ENCODE measurements at regions of chr2 and their contacts with region 1.

Region 1: DNA sequence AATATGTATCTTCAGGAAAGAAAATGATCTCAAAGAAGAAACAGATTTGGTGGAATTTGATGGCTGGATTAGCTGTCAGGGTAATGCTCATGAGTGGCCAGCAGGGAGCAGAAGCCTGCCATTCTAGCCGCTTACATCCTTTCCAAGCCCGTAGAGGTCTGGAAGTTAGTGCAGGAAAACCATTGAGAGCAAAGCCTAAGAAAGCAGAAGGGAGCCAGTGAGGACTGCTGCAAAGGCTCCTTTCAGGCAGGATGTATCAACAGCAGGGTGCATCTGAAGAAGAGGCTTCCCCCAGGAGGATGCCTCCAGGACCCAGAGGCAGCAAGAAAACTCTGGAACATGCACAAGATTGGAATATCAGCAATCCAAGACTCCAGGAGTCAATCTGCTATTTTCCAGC is 22.9 kb upstream of the LBH start:
- DNase-seq: peak; percentile 67
- ATAC-seq: peak; percentile 62
- H3K4me3 ChIP-seq: no peak overlapping the region
- H3K4me3 Mint-ChIP-seq: no peak overlapping the region
- H3K27ac ChIP-seq: no peak overlapping the region
- H3K27ac Mint-ChIP-seq: peak overlapping the region; percentile 22
- H3K4me1 ChIP-seq: peaks cover 9 to 18% of the 10 kb centered on the region in 2 donors
- H3K4me1 Mint-ChIP-seq: peaks cover 16% of the 10 kb centered on the region
- H3K27me3 ChIP-seq: no peaks in the 10 kb centered on the region
- H3K27me3 Mint-ChIP-seq: no peaks in the 10 kb centered on the region
- CTCF ChIP-seq: peak; percentile 88

Region 2: GRCh38 chr2:30165050-30165520 is 43.4 kb before region 1 on chr2:
- CTCF ChIA-PET with region 1: interaction called, 116 read pairs
- POLR2A ChIA-PET with region 1: no interaction called
- intact Hi-C with region 1: loop called (anchors 1 kb)
- DNase-seq: peak; percentile 87
- ATAC-seq: peak; percentile 100
- H3K4me3 ChIP-seq: no peak overlapping the region
- H3K4me3 Mint-ChIP-seq: no peak overlapping the region
- H3K27ac ChIP-seq: no peak overlapping the region
- H3K27ac Mint-ChIP-seq: no peak overlapping the region
- H3K4me1 ChIP-seq: peaks cover 8% of the 10 kb centered on the region in 2 donors
- H3K4me1 Mint-ChIP-seq: peaks cover 16% of the 10 kb centered on the region
- H3K27me3 ChIP-seq: no peaks in the 10 kb centered on the region
- H3K27me3 Mint-ChIP-seq: no peaks in the 10 kb centered on the region
- CTCF ChIP-seq: peak; percentile 85

Region 3: GRCh38 chr2:30239308-30239985 is 31.0 kb after region 1 on chr2:
- CTCF ChIA-PET with region 1: interaction called, 134 read pairs
- POLR2A ChIA-PET with region 1: no interaction called
- intact Hi-C with region 1: no loop called
- DNase-seq: peak; percentile 79
- ATAC-seq: peak; percentile 71
- H3K4me3 ChIP-seq: no peak overlapping the region
- H3K4me3 Mint-ChIP-seq: peak overlapping the region; percentile 35
- H3K27ac ChIP-seq: peak overlapping the region in 1 of 2 donors; percentile 94
- H3K27ac Mint-ChIP-seq: peak overlapping the region; percentile 62
- H3K4me1 ChIP-seq: peaks cover 73 to 79% of the 10 kb centered on the region in 2 donors
- H3K4me1 Mint-ChIP-seq: peaks cover 87% of the 10 kb centered on the region
- H3K27me3 ChIP-seq: no peaks in the 10 kb centered on the region
- H3K27me3 Mint-ChIP-seq: no peaks in the 10 kb centered on the region
- CTCF ChIP-seq: peak; percentile 88

Region 4: DNA sequence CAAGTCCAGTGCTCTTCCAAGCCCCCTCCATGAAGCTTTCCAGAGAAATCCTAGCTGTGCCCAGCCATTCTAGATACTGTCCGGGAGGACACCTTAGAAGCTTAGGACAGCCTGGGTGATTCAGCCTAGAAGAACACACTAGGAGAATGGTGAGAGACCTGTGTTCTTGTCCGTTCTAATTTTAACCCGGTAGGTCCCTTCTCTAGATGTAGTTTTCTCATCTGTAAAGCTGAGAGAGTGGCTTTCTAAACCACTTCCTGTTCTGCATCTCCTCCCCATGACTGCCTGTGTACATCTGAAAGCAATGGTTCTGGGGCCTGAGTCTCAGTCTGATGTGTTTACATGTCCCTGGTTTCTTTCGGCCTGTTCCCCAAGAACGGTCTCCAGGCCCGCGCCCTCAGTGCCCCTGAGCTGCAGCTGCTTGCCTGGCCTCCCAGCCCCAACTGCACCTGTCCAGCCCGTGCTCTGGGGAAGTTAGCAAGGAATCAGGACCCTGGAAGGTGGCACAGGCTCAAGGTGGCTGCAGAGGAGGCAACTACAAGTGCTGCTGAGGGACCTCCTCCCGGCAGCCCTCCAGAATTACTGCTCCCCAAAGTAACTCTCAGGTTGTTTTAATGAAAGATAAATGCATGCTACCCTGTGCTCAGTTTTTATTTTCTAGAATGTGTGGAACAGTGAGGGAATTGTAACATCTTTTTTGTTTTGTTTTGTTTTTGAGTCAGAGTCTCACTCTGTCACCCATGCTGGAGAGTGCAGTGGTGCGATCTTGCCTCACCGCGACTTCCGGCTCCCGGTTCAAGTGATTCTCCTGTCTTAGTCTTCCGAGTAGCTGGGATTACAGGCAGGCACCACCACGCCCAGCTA is 128.8 kb after region 1 on chr2:
- CTCF ChIA-PET with region 1: interaction called, 54 read pairs
- POLR2A ChIA-PET with region 1: interaction called, 3 read pairs
- intact Hi-C with region 1: no loop called
- DNase-seq: peak; percentile 80
- ATAC-seq: peak; percentile 89
- H3K4me3 ChIP-seq: peak overlapping the region; percentile 29 to 62 (median 42)
- H3K4me3 Mint-ChIP-seq: peak overlapping the region; percentile 81
- H3K27ac ChIP-seq: peak overlapping the region; percentile 89 to 90
- H3K27ac Mint-ChIP-seq: peak overlapping the region; percentile 99
- H3K4me1 ChIP-seq: peaks cover 93 to 94% of the 10 kb centered on the region in 2 donors
- H3K4me1 Mint-ChIP-seq: peaks cover 92% of the 10 kb centered on the region
- H3K27me3 ChIP-seq: no peaks in the 10 kb centered on the region
- H3K27me3 Mint-ChIP-seq: no peaks in the 10 kb centered on the region
- CTCF ChIP-seq: no peak

Region 5: DNA sequence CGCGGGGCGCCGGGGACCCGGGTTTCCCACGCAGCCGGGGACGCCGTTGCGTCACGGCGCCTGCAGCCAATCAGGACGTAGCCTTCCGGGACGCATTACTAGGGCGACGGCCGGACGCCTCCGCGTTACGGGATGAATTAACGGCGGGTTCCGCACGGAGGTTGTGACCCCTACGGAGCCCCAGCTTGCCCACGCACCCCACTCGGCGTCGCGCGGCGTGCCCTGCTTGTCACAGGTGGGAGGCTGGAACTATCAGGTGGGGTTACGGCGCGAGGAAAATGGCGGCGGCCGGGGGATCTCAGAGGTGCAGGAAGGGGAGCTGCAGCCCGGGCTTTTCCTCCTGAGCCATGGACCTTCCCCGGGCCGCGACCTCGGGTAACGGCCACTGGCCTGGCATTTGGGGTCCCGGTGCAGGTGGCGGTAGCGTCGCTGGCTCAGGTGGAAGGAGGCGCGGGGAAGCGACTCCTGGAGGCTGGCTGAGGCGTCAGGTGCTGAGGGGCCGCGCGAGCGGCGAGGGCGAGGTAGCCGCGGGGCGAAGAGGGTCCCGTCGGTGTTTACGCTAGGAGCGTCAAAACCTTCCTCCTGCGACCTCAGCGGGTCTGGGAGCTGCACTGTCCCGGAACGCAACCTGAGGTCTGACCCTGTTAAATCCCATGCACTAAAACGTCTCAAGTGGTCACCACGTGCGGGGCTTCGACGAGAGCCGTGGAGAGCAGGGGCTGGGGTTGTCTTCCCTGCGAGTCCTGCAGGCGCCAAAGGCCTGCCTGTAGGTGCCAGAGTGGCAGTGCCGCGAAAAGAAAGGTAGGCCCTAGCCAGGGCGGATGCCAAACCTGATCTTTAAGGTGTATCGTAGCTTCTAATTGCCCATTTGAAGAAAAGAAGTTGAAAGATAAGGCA is 238.9 kb after region 1 on chr2 and contains the start of gene LCLAT1:
- CTCF ChIA-PET with region 1: interaction called, 15 read pairs
- POLR2A ChIA-PET with region 1: no interaction called
- intact Hi-C with region 1: no loop called
- DNase-seq: peak; percentile 92
- ATAC-seq: peak; percentile 93
- H3K4me3 ChIP-seq: peak within 1 kb of the TSS; percentile 88 to 98 (median 97)
- H3K4me3 Mint-ChIP-seq: peak within 1 kb of the TSS; percentile 97
- H3K27ac ChIP-seq: peak within 1 kb of the TSS; percentile 82 to 84
- H3K27ac Mint-ChIP-seq: peak within 1 kb of the TSS; percentile 95
- H3K4me1 ChIP-seq: peaks cover 16 to 17% of the 10 kb centered on the region in 2 donors
- H3K4me1 Mint-ChIP-seq: peaks cover 25% of the 10 kb centered on the region
- H3K27me3 ChIP-seq: no peaks in the 10 kb centered on the region
- H3K27me3 Mint-ChIP-seq: no peaks in the 10 kb centered on the region
- CTCF ChIP-seq: peak; percentile 20
- total RNA-seq, gene LCLAT1: 21.7 and 21.9 TPM in 2 replicates

Region 6: GRCh38 chr2:30691948-30692828 is 483.7 kb after region 1 on chr2:
- CTCF ChIA-PET with region 1: interaction called, 31 read pairs
- POLR2A ChIA-PET with region 1: no interaction called
- intact Hi-C with region 1: no loop called
- DNase-seq: no peak
- ATAC-seq: no peak
- H3K4me3 ChIP-seq: no peak overlapping the region
- H3K4me3 Mint-ChIP-seq: no peak overlapping the region
- H3K27ac ChIP-seq: no peak overlapping the region
- H3K27ac Mint-ChIP-seq: no peak overlapping the region
- H3K4me1 ChIP-seq: no peaks in the 10 kb centered on the region
- H3K4me1 Mint-ChIP-seq: no peaks in the 10 kb centered on the region
- H3K27me3 ChIP-seq: no peaks in the 10 kb centered on the region
- H3K27me3 Mint-ChIP-seq: peaks cover 10% of the 10 kb centered on the region
- CTCF ChIP-seq: no peak

Measured in B cell (primary cell).